Activated CD4-positive, alpha-beta T cell treated with anti-CD3 and anti-CD28 coated beads for 36 hours (primary cell): ENCODE measurements at regions of chrX and their contacts with region 1.

Region 1: DNA sequence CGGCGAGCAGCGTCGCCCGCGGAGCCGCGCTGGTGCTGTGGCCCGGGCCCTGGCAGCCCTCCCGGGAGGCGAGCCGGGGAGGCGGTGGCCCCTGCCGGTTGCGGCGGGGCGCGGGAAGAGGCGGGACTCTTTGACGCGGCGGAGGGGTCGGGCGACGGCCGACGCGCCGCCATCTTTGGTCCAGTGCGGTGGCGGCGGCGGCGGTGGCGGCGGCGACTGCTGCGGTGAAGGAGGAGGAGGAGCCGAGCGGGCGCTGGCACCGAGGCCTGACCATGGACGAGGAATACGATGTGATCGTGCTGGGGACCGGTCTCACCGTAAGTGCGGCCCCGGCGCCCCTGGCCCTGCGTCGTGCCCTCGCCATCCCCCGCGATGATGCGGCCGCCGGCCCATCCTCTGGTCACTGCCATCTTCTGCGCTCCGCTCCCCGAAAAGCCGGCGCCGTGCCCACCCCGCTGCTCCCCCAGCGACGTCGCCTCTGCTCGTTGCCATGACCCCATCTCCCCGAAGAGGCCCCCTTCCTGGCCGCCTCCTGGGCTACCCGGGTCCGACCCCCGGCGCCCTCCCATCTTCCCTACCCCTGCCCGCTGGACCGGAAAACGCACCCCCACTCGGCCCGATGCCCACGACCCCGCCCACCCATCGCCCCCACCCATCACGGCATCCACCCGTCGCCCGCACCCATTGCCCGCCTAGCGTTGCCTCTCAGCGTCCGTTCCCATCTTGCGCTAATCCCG is at the start of gene GDI1:
- DNase-seq: peak; percentile 69
- ATAC-seq: peak; percentile 40
- H3K4me3 Mint-ChIP-seq: peak within 1 kb of the TSS; percentile 83
- H3K27ac Mint-ChIP-seq: peak within 1 kb of the TSS; percentile 87
- H3K4me1 Mint-ChIP-seq: peaks cover 22% of the 10 kb centered on the region
- H3K27me3 Mint-ChIP-seq: no peaks in the 10 kb centered on the region
- total RNA-seq, gene GDI1: 100 to 117 TPM

Region 2: GRCh38 chrX:154370882-154371770 is 66.0 kb before region 1 on chrX:
- CTCF ChIA-PET with region 1: no interaction called
- POLR2A ChIA-PET with region 1: no interaction called
- intact Hi-C with region 1: loop called in 1 of 2 experiments (anchors 2 kb)
- DNase-seq: peak; percentile 96
- ATAC-seq: peak; percentile 55
- H3K4me3 Mint-ChIP-seq: peak overlapping the region; percentile 86
- H3K27ac Mint-ChIP-seq: peak overlapping the region; percentile 55
- H3K4me1 Mint-ChIP-seq: peaks cover 22% of the 10 kb centered on the region
- H3K27me3 Mint-ChIP-seq: no peaks in the 10 kb centered on the region

Region 3: GRCh38 chrX:154458114-154458953 is 21.2 kb after region 1 on chrX and contains the start of gene PLXNA3:
- CTCF ChIA-PET with region 1: interaction called, 3 read pairs
- POLR2A ChIA-PET with region 1: no interaction called
- intact Hi-C with region 1: loop called in 1 of 2 experiments (anchors 2 kb)
- DNase-seq: peak; percentile 66
- ATAC-seq: peak; percentile 54
- H3K4me3 Mint-ChIP-seq: peak within 1 kb of the TSS; percentile 88
- H3K27ac Mint-ChIP-seq: peak within 1 kb of the TSS; percentile 91
- H3K4me1 Mint-ChIP-seq: peaks cover 5% of the 10 kb centered on the region
- H3K27me3 Mint-ChIP-seq: no peaks in the 10 kb centered on the region
- total RNA-seq, gene PLXNA3: 23.2 to 25.3 TPM

Region 4: DNA sequence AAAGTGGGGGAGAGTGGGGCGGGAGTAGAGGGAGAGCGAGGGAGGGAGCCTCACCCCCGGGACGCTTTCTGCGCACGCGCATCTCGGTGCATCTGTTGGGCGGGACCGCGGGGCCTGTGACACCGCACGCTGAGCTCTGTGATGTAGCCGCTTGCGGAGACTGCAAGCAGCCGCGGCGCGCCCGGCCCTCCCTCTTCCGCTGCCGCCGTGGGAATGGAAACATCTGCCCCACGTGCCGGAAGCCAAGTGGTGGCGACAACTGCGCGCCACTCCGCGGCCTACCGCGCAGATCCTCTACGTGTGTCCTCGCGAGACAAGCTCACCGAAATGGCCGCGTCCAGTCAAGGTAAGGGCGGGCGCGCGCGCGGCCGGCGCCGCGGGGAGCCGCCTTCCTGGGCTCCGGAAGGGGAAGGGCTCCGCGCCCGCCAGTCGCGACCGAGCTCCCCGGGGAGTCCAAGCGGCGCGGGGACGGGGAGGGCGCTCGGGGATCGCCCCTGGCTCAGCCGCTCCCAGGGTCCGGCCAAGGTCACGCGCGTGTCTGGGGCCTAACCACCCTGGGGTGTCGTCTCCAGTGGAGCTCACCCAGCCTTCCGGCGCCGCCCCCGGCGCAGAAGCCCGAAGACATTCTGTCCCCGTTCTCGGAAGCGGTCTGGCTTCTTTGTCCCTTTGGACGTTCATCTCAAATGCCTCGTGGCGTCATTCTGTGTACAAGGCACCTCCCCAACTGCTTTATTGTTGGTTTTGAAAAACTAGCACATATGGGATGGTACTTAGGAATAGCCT is 589.8 kb after region 1 on chrX and contains the start of gene FUNDC2:
- CTCF ChIA-PET with region 1: no interaction called
- POLR2A ChIA-PET with region 1: no interaction called
- intact Hi-C with region 1: no loop called
- DNase-seq: peak; percentile 94
- ATAC-seq: peak; percentile 86
- H3K4me3 Mint-ChIP-seq: peak within 1 kb of the TSS; percentile 86
- H3K27ac Mint-ChIP-seq: peak within 1 kb of the TSS; percentile 93
- H3K4me1 Mint-ChIP-seq: peaks cover 21% of the 10 kb centered on the region
- H3K27me3 Mint-ChIP-seq: no peaks in the 10 kb centered on the region
- total RNA-seq, gene FUNDC2: 83.7 to 86.9 TPM